ENCODE measurements at regions of chr15 and their contacts with region 1.

Region 1: DNA sequence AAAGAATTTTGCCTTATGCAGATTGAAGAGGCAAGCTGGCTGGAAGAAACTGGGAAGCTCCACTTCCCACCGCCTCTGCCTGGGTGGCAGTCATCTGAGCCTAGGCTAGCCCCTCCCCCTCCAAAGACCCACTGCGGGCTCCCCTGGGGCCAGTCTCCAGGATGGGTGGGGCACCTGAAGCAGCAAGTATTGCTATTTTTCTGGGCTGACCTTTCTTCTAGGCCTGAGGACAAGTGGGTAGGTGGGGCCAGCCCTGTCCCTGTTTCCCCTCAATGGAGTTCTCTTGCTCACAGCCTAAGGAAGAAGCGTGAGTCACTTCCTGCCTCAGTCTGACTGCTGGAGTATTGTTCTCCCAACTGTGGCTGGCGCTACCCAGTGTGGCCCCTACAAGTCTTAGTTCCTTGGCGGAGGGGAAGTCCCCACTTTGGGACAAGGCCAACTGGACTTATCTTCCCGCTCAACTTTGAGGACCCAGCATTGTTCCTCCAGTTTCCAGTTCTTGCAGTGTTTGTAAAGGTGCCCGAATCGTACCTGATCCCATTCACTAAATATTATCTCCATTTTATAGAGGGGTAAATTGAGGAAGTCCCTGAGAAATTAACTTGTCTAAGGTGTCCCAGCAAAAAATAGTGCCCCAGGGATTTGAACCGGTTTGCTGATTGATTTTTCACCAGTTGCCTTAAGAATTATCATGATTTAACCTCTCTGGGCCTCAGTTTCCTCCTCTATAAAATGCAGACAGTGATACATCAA is 1.4 kb downstream of the FURIN start:
- DNase-seq: peak; percentile 73 to 93 (median 74)
- ATAC-seq: peak; percentile 68
- H3K4me3 ChIP-seq: peak overlapping the region; percentile 78
- H3K27ac ChIP-seq: peak overlapping the region; percentile 96
- H3K4me1 ChIP-seq: peaks cover 67 to 77% of the 10 kb centered on the region in 2 experiments
- H3K27me3 ChIP-seq: no peaks in the 10 kb centered on the region; a peak in 1 of 5 replicates
- CTCF ChIP-seq: no peak
- EP300 ChIP-seq: no peak; the same call in 1 of the 2 replicates
- POLR2A ChIP-seq: peak; percentile 75
- RAD21 ChIP-seq: peak in 1 of 2 experiments; percentile 22; a peak in 2 of 4 replicates

Region 2: GRCh38 chr15:90648137-90649070 is 221.4 kb before region 1 on chr15:
- CTCF ChIA-PET with region 1: no interaction called
- POLR2A ChIA-PET with region 1: interaction called, 6 read pairs
- in situ Hi-C with region 1: no loop called
- intact Hi-C with region 1: loop called (anchors 5 kb)
- DNase-seq: peak; percentile 67 to 97 (median 76)
- ATAC-seq: peak; percentile 83
- H3K4me3 ChIP-seq: no peak overlapping the region
- H3K27ac ChIP-seq: peak overlapping the region; percentile 97
- H3K4me1 ChIP-seq: peaks cover 33 to 38% of the 10 kb centered on the region in 2 experiments
- H3K27me3 ChIP-seq: no peaks in the 10 kb centered on the region
- CTCF ChIP-seq: peak; percentile 82 to 94 (median 88)
- EP300 ChIP-seq: peak; percentile 89
- POLR2A ChIP-seq: peak; percentile 92
- RAD21 ChIP-seq: peak; percentile 96

Region 3: GRCh38 chr15:90716976-90717821 is 152.6 kb before region 1 on chr15 and contains the start of gene BLM:
- CTCF ChIA-PET with region 1: no interaction called
- POLR2A ChIA-PET with region 1: interaction called, 6 read pairs
- in situ Hi-C with region 1: no loop called
- intact Hi-C with region 1: loop called (anchors 5 kb)
- DNase-seq: peak; percentile 98 to 99 (median 99)
- ATAC-seq: peak; percentile 99
- H3K4me3 ChIP-seq: peak within 1 kb of the TSS; percentile 73
- H3K27ac ChIP-seq: peak within 1 kb of the TSS; percentile 96
- H3K4me1 ChIP-seq: peaks cover 6 to 10% of the 10 kb centered on the region in 2 experiments; a peak in 4 of 5 replicates
- H3K27me3 ChIP-seq: no peaks in the 10 kb centered on the region
- CTCF ChIP-seq: peak; percentile 23 to 41 (median 38); a peak in 3 of 6 replicates
- EP300 ChIP-seq: 0 out of 2 replicates have a peak, but pooled peaks have one; percentile 5
- POLR2A ChIP-seq: peak; percentile 95
- RAD21 ChIP-seq: no peak
- polyA plus RNA-seq, gene BLM: 21.0 to 29.7 TPM

Region 4: DNA sequence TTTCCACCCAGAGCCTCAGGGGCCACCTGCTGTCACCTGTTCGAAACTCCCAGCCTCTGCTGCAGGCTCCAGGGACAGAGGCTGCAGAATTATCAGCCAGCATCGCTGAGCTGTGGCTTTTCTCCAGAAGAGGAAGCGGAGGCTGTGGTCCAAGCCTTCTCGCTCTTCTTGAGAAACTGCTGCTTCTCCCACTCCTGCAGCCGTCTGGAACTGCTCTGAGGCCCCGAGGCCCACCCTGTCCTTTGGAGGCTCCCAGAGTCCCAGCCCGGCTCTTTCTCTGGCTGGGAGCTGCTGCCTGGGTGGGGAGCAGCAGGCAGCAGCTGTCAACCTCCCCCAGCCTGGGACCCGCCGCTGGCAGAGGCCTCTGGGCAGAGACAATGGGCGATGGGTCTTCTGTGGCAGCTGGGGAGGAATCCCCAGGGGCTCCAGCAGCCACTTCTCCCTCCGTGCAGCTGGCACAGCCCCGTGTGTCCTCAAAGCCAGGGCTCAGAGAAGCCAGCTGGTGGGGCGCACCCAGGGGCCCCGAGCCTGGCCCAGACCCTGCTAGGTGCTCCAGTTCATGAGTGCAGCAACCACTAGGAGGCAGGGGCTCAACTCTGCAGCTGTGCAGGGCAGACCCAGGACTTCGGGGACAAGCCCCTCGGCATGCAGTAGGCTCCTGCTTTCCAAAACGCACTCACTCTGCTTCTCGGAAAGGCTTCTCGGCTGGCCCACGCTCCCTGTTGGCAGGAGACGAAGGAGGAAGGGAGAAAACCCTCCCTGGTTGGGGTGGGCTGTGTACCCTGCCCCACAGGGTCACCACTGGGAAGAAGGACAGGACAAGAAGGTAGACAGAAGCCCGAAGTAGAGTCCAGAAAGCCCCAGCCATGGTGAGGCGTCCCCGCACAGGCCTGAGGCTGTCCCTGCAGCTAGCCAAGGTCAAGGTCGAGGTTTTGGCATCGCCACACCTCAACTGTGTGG is 51.2 kb before region 1 on chr15:
- CTCF ChIA-PET with region 1: no interaction called
- POLR2A ChIA-PET with region 1: no interaction called
- in situ Hi-C with region 1: no loop called
- intact Hi-C with region 1: loop called (anchors 5 kb)
- DNase-seq: peak in 3 of 4 experiments; percentile 35 to 49 (median 42)
- ATAC-seq: peak; percentile 75
- H3K4me3 ChIP-seq: no peak overlapping the region
- H3K27ac ChIP-seq: no peak overlapping the region
- H3K4me1 ChIP-seq: peaks cover 8 to 35% of the 10 kb centered on the region in 2 experiments; a peak in 4 of 5 replicates
- H3K27me3 ChIP-seq: no peaks in the 10 kb centered on the region
- CTCF ChIP-seq: peak; percentile 32 to 46 (median 44); a peak in 5 of 6 replicates
- EP300 ChIP-seq: no peak
- POLR2A ChIP-seq: no peak
- RAD21 ChIP-seq: peak in 1 of 2 experiments; percentile 41; a peak in 2 of 4 replicates

Region 5: GRCh38 chr15:90839187-90840071 is 30.3 kb before region 1 on chr15:
- CTCF ChIA-PET with region 1: interaction called, 4 read pairs
- POLR2A ChIA-PET with region 1: interaction called, 4 read pairs
- in situ Hi-C with region 1: no loop called
- intact Hi-C with region 1: loop called (anchors 1 kb)
- DNase-seq: no peak
- ATAC-seq: no peak
- H3K4me3 ChIP-seq: no peak overlapping the region
- H3K27ac ChIP-seq: peak overlapping the region; percentile 88; the same call in 2 of the 3 replicates
- H3K4me1 ChIP-seq: peaks cover 59 to 68% of the 10 kb centered on the region in 2 experiments
- H3K27me3 ChIP-seq: no peaks in the 10 kb centered on the region
- CTCF ChIP-seq: no peak
- EP300 ChIP-seq: no peak
- POLR2A ChIP-seq: no peak
- RAD21 ChIP-seq: no peak

Region 6: GRCh38 chr15:90851114-90851513 is 18.7 kb before region 1 on chr15:
- CTCF ChIA-PET with region 1: no interaction called
- POLR2A ChIA-PET with region 1: interaction called, 10 read pairs
- in situ Hi-C with region 1: no loop called
- intact Hi-C with region 1: no loop called
- DNase-seq: no peak
- ATAC-seq: no peak; the same call in 2 of the 3 replicates
- H3K4me3 ChIP-seq: no peak overlapping the region
- H3K27ac ChIP-seq: no peak overlapping the region
- H3K4me1 ChIP-seq: peaks cover 10 to 28% of the 10 kb centered on the region in 2 experiments; a peak in 4 of 5 replicates
- H3K27me3 ChIP-seq: no peaks in the 10 kb centered on the region
- CTCF ChIP-seq: no peak
- EP300 ChIP-seq: no peak
- POLR2A ChIP-seq: no peak
- RAD21 ChIP-seq: no peak

Measured in K562 (cell line).